ENCODE measurements at regions of chr1 and their contacts with region 1.

Region 1: DNA sequence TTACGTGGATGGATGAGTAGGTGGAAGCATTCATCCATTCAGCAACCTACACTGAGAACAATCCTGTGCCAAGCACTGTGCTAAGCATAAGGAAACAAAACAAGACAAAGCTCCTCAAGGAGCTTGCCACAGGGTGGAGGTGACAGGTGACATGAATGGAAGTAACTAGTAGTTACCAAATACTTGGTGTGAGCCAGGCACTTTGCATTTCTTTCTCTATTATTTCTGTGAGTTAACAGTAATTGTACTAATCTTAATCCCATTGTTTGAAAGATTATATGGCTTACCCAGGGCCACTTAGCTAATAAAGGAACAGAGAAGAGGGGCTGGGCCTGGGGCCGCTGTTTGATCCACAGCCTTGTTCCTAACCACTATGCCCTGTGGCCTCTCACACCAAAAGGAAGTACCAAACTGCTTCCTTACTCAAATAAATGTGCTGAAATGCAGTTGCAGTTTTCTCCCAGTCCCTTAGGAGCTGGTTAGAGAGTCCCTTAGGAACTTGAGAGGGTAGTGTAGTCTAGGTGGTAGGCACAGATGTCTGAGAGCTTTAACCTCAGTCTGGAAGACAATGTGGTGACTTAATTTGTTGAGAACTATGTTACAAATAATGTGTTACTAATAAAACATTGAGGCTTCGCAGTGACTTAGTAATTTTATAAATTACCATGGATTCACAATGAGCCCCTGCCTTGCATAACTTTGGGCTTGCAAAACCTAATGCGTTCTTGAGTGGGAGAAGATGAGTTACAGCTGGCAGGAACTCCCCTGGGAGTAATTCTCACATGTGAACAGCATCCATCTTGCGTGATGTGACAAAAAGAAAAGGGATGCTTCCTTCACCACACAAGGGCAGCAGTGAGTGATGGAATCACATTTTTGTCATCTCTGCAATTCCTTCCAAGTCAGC is 69.8 kb downstream of the MPZL1 start:
- DNase-seq: no peak
- H3K4me3 ChIP-seq: no peak overlapping the region
- H3K4me3 Mint-ChIP-seq: no peak overlapping the region
- H3K27ac ChIP-seq: no peak overlapping the region
- H3K27ac Mint-ChIP-seq: no peak overlapping the region
- H3K4me1 ChIP-seq: no peaks in the 10 kb centered on the region
- H3K4me1 Mint-ChIP-seq: no peaks in the 10 kb centered on the region
- H3K27me3 ChIP-seq: no peaks in the 10 kb centered on the region
- H3K27me3 Mint-ChIP-seq: no peaks in the 10 kb centered on the region

Region 2: GRCh38 chr1:167803358-167804207 is 12.0 kb after region 1 on chr1:
- CTCF ChIA-PET with region 1: interaction called, 14 read pairs
- POLR2A ChIA-PET with region 1: no interaction called
- intact Hi-C with region 1: no loop called
- DNase-seq: peak; percentile 70 to 81 (median 73)
- H3K4me3 ChIP-seq: no peak overlapping the region
- H3K4me3 Mint-ChIP-seq: peak overlapping the region in 7 of 8 donors; percentile 35 to 70 (median 57)
- H3K27ac ChIP-seq: no peak overlapping the region
- H3K27ac Mint-ChIP-seq: peak overlapping the region in 5 of 7 donors; percentile 6 to 87 (median 62)
- H3K4me1 ChIP-seq: peaks cover 26% of the 10 kb centered on the region
- H3K4me1 Mint-ChIP-seq: peaks cover 23 to 34% (median 26%) of the 10 kb centered on the region in 4 donors
- H3K27me3 ChIP-seq: no peaks in the 10 kb centered on the region
- H3K27me3 Mint-ChIP-seq: peaks cover 2% of the 10 kb centered on the region in 2 donors

Measured in CD4-positive, alpha-beta memory T cell (primary cell).